CD8-positive, alpha-beta T cell (primary cell): ENCODE measurements at regions of chr1 and their contacts with region 1.

Region 1: GRCh38 chr1:28088168-28088961 is at the start of gene EYA3:
- DNase-seq: peak; percentile 97 to 100 (median 99)
- ATAC-seq: peak; percentile 95
- H3K4me3 ChIP-seq: peak within 1 kb of the TSS; percentile 72 to 84
- H3K4me3 Mint-ChIP-seq: peak within 1 kb of the TSS; percentile 85
- H3K27ac ChIP-seq: peak within 1 kb of the TSS; percentile 58 to 89
- H3K27ac Mint-ChIP-seq: peak within 1 kb of the TSS; percentile 97
- H3K4me1 ChIP-seq: peaks cover 25% of the 10 kb centered on the region
- H3K4me1 Mint-ChIP-seq: peaks cover 45% of the 10 kb centered on the region
- H3K27me3 ChIP-seq: no peaks in the 10 kb centered on the region
- H3K27me3 Mint-ChIP-seq: peaks cover 3% of the 10 kb centered on the region
- CTCF ChIP-seq: no peak
- total RNA-seq, gene EYA3: 4.9 to 5.2 TPM

Region 2: DNA sequence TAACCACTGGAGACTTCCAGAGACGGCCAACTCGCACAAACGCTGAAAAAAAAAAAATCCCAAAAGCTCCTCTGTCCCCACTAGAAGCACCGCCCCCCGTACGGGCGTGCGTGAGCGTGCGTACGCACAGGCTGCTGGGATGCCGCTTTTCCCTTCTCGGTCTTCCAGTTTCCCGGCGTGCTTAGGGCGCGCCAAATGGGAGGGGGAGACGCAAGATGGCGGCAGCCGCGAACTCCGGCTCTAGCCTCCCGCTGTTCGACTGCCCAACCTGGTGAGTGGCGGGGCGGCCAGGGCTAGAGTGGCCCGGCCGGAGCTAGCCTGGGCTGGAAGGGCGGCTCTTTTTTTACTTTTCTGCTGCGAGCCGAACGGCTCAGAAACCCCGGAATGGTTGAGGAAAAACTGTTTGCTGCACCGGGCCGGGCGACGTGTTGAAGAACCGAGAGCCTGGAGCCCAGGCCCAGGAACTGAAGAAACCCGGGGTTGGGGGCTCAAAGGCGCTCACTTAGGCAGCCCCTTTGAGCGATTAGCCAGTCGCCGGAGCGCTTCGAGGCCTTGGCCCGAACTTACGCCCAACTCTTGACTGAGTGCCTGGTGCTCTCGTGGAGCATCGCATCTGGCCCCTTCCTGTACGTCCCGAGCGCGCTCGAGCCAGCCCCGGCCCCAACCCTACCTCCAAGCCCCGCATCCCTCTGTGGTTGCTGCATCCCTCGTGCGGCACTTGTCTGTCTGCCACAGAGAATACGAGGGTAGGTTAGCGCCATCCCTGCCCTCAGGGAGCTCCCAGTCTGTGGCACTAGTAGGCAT is 257.5 kb before region 1 on chr1 and contains the start of gene PPP1R8:
- CTCF ChIA-PET with region 1: no interaction called
- POLR2A ChIA-PET with region 1: no interaction called
- intact Hi-C with region 1: loop called in 1 of 2 experiments (anchors 1 kb)
- DNase-seq: peak; percentile 69 to 96 (median 90)
- ATAC-seq: peak; percentile 99
- H3K4me3 ChIP-seq: peak within 1 kb of the TSS; percentile 91 to 99
- H3K4me3 Mint-ChIP-seq: peak within 1 kb of the TSS; percentile 91
- H3K27ac ChIP-seq: peak within 1 kb of the TSS; percentile 82 to 88
- H3K27ac Mint-ChIP-seq: peak within 1 kb of the TSS; percentile 91
- H3K4me1 ChIP-seq: peaks cover 25% of the 10 kb centered on the region
- H3K4me1 Mint-ChIP-seq: peaks cover 43% of the 10 kb centered on the region
- H3K27me3 ChIP-seq: no peaks in the 10 kb centered on the region
- H3K27me3 Mint-ChIP-seq: no peaks in the 10 kb centered on the region
- CTCF ChIP-seq: no peak
- total RNA-seq, gene PPP1R8: 24.9 to 25.3 TPM

Region 3: DNA sequence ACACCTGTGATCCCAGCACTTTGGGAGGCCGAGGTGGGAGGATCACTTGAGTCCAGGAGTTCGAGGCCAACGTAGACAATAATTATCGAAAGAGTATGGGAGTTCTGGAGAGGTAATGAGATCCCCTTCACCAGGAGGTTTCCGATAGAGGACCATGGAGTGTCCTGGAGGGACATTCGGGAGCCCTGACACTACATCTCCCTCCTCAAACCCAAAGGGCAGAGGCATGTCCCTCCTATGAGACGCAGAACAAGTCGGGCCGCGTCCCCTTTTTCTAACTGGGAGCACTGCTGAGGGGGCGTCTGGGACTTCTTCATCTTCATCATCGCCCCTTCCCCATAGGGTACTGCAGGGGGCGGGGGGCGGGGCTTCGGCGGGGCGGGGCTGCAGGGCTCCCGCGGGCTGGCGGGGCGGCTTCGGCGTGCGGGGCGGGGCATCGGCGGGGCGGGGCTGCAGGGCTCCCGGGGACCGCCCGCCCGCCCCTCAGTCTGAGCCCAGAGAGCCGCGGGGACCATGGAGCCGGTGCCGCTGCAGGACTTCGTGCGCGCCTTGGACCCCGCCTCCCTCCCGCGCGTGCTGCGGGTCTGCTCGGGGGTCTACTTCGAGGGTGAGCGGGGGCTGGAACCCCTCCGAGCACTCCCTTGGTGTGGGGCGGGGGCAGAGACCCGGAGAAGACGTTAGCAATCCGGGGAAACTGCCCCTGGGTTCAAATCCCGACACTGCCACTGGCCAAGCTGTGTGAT is 216.1 kb before region 1 on chr1 and contains the start of gene THEMIS2:
- CTCF ChIA-PET with region 1: no interaction called
- POLR2A ChIA-PET with region 1: no interaction called
- intact Hi-C with region 1: loop called (anchors 2 to 5 kb)
- DNase-seq: peak; percentile 58 to 86 (median 81)
- ATAC-seq: peak; percentile 83
- H3K4me3 ChIP-seq: peak within 1 kb of the TSS; percentile 83 to 100
- H3K4me3 Mint-ChIP-seq: peak within 1 kb of the TSS; percentile 98
- H3K27ac ChIP-seq: peak within 1 kb of the TSS; percentile 47 to 61
- H3K27ac Mint-ChIP-seq: peak within 1 kb of the TSS; percentile 89
- H3K4me1 ChIP-seq: peaks cover 46% of the 10 kb centered on the region
- H3K4me1 Mint-ChIP-seq: peaks cover 49% of the 10 kb centered on the region
- H3K27me3 ChIP-seq: no peaks in the 10 kb centered on the region
- H3K27me3 Mint-ChIP-seq: no peaks in the 10 kb centered on the region
- CTCF ChIP-seq: no peak
- total RNA-seq, gene THEMIS2: 13.4 to 15.2 TPM

Region 4: GRCh38 chr1:28208818-28209441 is 120.6 kb after region 1 on chr1:
- CTCF ChIA-PET with region 1: interaction called, 31 read pairs
- POLR2A ChIA-PET with region 1: interaction called, 3 read pairs
- intact Hi-C with region 1: loop called (anchors 1 kb)
- DNase-seq: peak; percentile 19 to 81 (median 62)
- ATAC-seq: peak; percentile 95
- H3K4me3 ChIP-seq: no peak overlapping the region
- H3K4me3 Mint-ChIP-seq: no peak overlapping the region
- H3K27ac ChIP-seq: no peak overlapping the region
- H3K27ac Mint-ChIP-seq: no peak overlapping the region
- H3K4me1 ChIP-seq: no peaks in the 10 kb centered on the region
- H3K4me1 Mint-ChIP-seq: peaks cover 8% of the 10 kb centered on the region
- H3K27me3 ChIP-seq: no peaks in the 10 kb centered on the region
- H3K27me3 Mint-ChIP-seq: no peaks in the 10 kb centered on the region
- CTCF ChIP-seq: peak; percentile 69

Region 5: GRCh38 chr1:28329395-28330153 is 241.2 kb after region 1 on chr1:
- CTCF ChIA-PET with region 1: no interaction called
- POLR2A ChIA-PET with region 1: interaction called, 4 read pairs
- intact Hi-C with region 1: loop called (anchors 2 kb)
- DNase-seq: peak in 6 of 9 experiments; percentile 18 to 72 (median 46)
- ATAC-seq: peak; percentile 20
- H3K4me3 ChIP-seq: peak overlapping the region; percentile 53 to 57
- H3K4me3 Mint-ChIP-seq: peak overlapping the region; percentile 95
- H3K27ac ChIP-seq: peak overlapping the region; percentile 84 to 86
- H3K27ac Mint-ChIP-seq: peak overlapping the region; percentile 98
- H3K4me1 ChIP-seq: peaks cover 20% of the 10 kb centered on the region
- H3K4me1 Mint-ChIP-seq: peaks cover 34% of the 10 kb centered on the region
- H3K27me3 ChIP-seq: no peaks in the 10 kb centered on the region
- H3K27me3 Mint-ChIP-seq: no peaks in the 10 kb centered on the region
- CTCF ChIP-seq: no peak

Region 6: GRCh38 chr1:28374297-28374696 is 285.9 kb after region 1 on chr1:
- CTCF ChIA-PET with region 1: no interaction called
- POLR2A ChIA-PET with region 1: no interaction called
- intact Hi-C with region 1: no loop called
- DNase-seq: no peak
- ATAC-seq: no peak
- H3K4me3 ChIP-seq: no peak overlapping the region
- H3K4me3 Mint-ChIP-seq: no peak overlapping the region
- H3K27ac ChIP-seq: no peak overlapping the region
- H3K27ac Mint-ChIP-seq: no peak overlapping the region
- H3K4me1 ChIP-seq: peaks cover 5% of the 10 kb centered on the region
- H3K4me1 Mint-ChIP-seq: peaks cover 36% of the 10 kb centered on the region
- H3K27me3 ChIP-seq: no peaks in the 10 kb centered on the region
- H3K27me3 Mint-ChIP-seq: no peaks in the 10 kb centered on the region
- CTCF ChIP-seq: no peak